Activated T-helper 1 cell treated with anti-CD3 and anti-CD28 coated beads, Interleukin-12 subunit alpha, Interleukin-12 subunit beta, Interleukin-2, Interleukin-4 antibody, amounts not matched to agents 30 ng/mL and 10 ng/mL and 1 ng/mL, durations not matched to agents 14 hours and 24 hours and 36 hours (primary cell): ENCODE measurements at regions of chr22 and their contacts with region 1.

Region 1: GRCh38 chr22:37608477-37609239 is at the start of gene GGA1:
- DNase-seq: peak; percentile 96
- H3K4me3 Mint-ChIP-seq: peak within 1 kb of the TSS; percentile 96
- H3K27ac Mint-ChIP-seq: peak within 1 kb of the TSS; percentile 98
- H3K4me1 Mint-ChIP-seq: peaks cover 45% of the 10 kb centered on the region
- H3K27me3 Mint-ChIP-seq: peaks cover 1% of the 10 kb centered on the region
- total RNA-seq, gene GGA1: 70.8 and 78.9 TPM in 2 replicates

Region 2: DNA sequence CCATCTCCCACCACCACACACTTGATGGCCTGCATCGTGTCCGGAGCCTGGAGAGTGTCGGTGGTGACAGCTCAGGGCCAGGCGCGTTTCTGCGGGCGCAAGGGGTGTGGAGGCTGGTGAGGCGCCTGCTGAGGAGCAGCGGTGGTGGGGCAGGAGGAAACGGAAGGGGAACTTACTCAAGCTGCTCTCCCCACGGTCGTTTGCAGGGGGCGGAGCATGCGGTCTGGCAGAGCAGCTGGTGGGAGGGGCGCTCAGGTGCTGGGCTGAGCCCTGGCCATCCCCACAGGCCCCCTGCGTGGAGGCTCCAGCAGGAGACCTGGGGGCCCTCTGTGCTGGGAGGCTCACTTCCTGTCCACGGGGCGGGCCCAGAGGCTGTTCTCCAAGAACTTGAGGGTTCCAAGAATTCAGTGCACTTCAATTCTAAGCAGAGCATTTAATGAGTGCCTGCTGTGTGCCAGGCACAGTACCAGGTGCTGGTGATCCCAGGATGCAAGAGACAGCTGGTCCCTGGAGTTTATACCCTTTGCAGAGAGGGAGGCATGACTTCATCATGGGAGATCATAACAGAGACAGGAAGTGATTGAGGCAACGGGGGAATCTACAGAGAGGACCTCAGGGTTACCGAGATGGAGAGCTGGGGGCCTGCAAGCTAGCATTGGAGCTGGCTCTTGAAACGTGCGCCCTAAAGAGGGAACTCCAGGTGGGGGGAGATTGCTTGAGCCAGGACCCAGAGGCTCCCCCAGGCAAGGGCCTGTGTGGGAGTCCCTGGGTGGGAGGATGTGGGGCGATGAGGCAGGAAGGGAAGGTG is 364.3 kb before region 1 on chr22 and contains the start of gene RAC2:
- intact Hi-C with region 1: loop called (anchors 5 kb)
- DNase-seq: peak; percentile 83
- H3K4me3 Mint-ChIP-seq: peak within 1 kb of the TSS; percentile 99
- H3K27ac Mint-ChIP-seq: peak within 1 kb of the TSS; percentile 99
- H3K4me1 Mint-ChIP-seq: peaks cover 46% of the 10 kb centered on the region
- H3K27me3 Mint-ChIP-seq: no peaks in the 10 kb centered on the region
- total RNA-seq, gene RAC2: 592 and 614 TPM in 2 replicates

Region 3: DNA sequence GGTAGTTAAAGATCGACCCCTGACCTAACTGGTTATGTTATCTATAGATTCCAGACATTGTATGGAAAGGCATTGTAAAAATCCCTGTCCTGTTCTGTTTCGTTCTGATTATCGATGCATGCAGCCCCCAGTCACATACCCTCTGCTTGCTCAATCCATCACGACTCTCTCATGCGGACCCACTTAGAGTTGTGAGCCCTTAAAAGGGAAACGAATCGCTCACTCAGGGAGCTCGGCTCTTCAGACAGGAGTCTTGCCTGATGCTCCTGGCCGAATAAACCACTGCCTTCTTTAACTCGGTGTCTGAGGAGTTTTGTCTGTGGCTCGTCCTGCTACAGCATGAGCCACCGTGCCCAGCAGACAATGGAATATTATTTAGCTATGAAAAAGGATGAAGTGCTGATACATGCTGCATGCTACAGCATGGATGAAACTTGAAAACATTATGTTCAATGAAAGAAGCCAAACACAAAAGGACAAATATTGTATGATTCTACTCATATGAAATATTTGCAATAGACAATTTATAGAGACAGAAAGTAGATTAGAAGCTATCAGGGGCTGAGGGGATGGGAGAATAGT is 16.7 kb before region 1 on chr22:
- intact Hi-C with region 1: loop called (anchors 1 kb)
- DNase-seq: no peak
- H3K4me3 Mint-ChIP-seq: peak overlapping the region; percentile 79
- H3K27ac Mint-ChIP-seq: no peak overlapping the region
- H3K4me1 Mint-ChIP-seq: peaks cover 13% of the 10 kb centered on the region
- H3K27me3 Mint-ChIP-seq: peaks cover 11% of the 10 kb centered on the region

Region 4: GRCh38 chr22:37647928-37648327 is 39.3 kb after region 1 on chr22:
- intact Hi-C with region 1: no loop called
- DNase-seq: no peak
- H3K4me3 Mint-ChIP-seq: no peak overlapping the region
- H3K27ac Mint-ChIP-seq: no peak overlapping the region
- H3K4me1 Mint-ChIP-seq: peaks cover 9% of the 10 kb centered on the region
- H3K27me3 Mint-ChIP-seq: no peaks in the 10 kb centered on the region

Region 5: GRCh38 chr22:37676736-37677492 is 68.3 kb after region 1 on chr22:
- intact Hi-C with region 1: loop called (anchors 1 kb)
- DNase-seq: peak; percentile 89
- H3K4me3 Mint-ChIP-seq: peak overlapping the region; percentile 82
- H3K27ac Mint-ChIP-seq: peak overlapping the region; percentile 98
- H3K4me1 Mint-ChIP-seq: peaks cover 55% of the 10 kb centered on the region
- H3K27me3 Mint-ChIP-seq: no peaks in the 10 kb centered on the region

Region 6: DNA sequence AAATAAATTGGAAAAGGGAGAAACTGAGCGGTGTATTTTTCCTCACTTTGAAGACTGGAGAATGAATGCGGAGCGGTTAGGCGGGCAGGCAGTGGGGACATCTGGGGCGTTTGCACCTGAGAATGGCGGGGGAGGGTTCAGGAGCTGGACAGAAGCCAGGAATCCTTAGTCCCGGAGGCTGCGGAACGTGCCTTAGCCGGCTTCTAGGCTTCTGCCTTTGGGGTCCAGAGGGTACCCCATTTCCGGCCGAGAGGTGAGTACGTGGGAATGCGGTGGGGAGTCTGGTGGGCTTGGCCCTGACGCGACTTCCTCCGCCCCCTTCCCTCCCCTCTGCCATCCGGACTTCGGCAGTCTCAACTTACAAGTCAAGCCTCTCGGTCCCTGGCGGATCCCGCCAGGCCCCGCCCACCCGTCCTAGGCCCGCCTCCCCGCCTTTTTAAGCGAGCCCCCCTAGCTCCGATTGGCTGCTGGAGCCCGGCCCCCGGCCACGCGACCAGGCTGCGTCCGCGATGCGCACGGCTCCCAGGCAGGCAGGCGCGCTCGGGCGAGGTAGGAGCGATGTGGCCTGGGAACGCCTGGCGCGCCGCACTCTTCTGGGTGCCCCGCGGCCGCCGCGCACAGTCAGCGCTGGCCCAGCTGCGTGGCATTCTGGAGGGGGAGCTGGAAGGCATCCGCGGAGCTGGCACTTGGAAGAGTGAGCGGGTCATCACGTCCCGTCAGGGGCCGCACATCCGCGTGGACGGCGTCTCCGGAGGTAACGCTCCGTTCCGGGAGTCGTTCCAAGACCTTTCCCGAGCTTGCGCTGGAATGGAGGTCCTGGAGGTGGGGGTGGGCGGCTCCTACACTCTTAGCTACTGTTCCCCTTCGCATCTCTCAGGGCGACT is 199.0 kb after region 1 on chr22 and contains the start of gene GCAT:
- intact Hi-C with region 1: loop called (anchors 1 kb)
- DNase-seq: peak; percentile 90
- H3K4me3 Mint-ChIP-seq: peak within 1 kb of the TSS; percentile 82
- H3K27ac Mint-ChIP-seq: peak within 1 kb of the TSS; percentile 58
- H3K4me1 Mint-ChIP-seq: peaks cover 44% of the 10 kb centered on the region
- H3K27me3 Mint-ChIP-seq: peaks cover 13% of the 10 kb centered on the region
- total RNA-seq, gene GCAT: 28.5 and 28.9 TPM in 2 replicates